ENCODE measurements at regions of chr5 and their contacts with region 1.

Region 1: DNA sequence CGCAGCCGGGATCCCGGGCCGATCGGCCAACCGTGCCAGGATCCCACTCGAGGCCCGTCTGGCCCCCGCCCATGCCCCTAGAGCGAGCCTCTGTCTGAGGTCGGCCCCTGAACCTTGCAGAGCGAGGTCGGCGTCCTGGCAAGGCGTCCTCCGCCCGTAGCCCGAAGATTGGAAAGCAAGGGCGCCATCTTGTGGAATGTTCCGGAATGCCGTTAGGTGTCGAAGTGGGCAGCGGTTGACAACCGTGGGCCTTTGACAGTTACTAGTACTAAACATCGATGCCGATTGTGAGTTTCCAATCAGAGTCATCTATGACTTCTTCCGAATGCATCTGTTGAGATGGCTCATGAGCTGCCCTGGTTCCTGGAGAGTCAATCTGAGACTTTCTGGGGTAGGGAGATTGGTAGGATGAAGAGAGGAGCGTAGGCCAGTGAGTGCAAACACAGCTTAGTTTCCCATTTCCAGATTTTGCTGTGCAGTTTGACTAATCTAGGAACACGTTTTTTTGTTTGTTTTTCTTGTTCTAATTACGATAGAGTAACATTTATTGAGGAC is 923 bp upstream of the PLK2 start:
- DNase-seq: peak; percentile 94
- H3K4me3 Mint-ChIP-seq: peak overlapping the region; percentile 92
- H3K27ac Mint-ChIP-seq: peak overlapping the region; percentile 96
- H3K4me1 Mint-ChIP-seq: peaks cover 29% of the 10 kb centered on the region
- H3K27me3 Mint-ChIP-seq: no peaks in the 10 kb centered on the region
- CTCF ChIP-seq: peak; percentile 72

Region 2: DNA sequence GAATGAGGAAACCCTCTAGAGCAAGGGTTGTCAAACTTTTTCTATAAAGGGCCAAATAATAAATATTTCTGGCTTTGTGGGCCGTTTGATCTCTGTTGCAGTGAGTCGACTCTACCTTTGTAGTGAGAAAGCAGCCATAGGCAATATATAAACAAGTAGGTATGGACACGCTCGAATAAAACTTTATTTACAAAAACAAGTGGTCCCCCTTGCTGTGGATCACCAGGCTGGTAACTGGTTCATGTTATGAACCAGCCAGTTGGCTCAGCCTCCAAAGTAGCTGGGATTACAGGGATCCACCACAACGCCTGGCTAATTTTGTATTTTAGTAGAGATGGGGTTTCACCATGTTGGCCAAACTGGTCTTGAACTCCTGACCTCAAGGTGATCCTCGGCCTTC is 1168.5 kb before region 1 on chr5:
- CTCF ChIA-PET with region 1: interaction called, 43 read pairs
- POLR2A ChIA-PET with region 1: interaction called, 8 read pairs
- intact Hi-C with region 1: no loop called
- DNase-seq: no peak
- H3K4me3 Mint-ChIP-seq: no peak overlapping the region
- H3K27ac Mint-ChIP-seq: no peak overlapping the region
- H3K4me1 Mint-ChIP-seq: no peaks in the 10 kb centered on the region
- H3K27me3 Mint-ChIP-seq: no peaks in the 10 kb centered on the region
- CTCF ChIP-seq: no peak

Region 3: DNA sequence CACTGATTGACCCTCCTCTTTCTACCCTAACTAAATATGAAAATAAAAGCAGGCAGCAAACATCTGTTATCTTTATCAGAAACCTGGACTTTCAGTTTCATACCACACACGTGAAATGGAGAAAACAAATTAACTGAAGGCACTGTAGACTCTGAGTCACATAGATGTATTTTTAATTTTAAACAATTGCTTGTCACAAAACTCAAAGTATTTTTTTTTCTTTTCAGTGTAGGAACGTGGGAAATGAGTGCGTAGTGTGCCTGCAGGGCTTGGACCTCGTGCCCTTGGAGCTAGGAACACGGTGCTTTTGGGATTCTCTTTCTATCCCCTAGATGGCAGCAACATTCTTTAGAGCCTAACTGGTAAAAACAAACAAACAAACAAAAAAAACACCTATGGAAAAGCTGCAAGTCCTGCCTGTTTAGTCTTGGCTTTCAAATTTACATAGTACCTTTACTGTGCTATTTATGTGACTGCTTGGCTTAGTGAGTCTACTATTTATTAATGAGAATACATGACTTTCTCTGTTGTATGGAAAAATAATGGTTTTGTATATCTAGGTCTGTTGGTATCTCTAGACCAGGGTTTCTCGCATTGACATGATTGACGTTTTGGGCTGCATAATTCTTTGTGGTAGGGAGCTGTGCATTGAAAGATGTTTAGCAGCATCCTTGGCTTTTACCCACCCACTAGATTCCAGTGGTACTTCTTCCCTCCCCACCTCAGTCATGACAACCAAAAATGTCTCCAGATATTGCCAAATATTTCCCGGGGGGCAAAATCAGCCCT is 961.4 kb before region 1 on chr5:
- CTCF ChIA-PET with region 1: interaction called, 48 read pairs
- POLR2A ChIA-PET with region 1: interaction called, 8 read pairs
- intact Hi-C with region 1: loop called (anchors 1 kb)
- DNase-seq: peak; percentile 69
- H3K4me3 Mint-ChIP-seq: peak overlapping the region; percentile 53
- H3K27ac Mint-ChIP-seq: no peak overlapping the region
- H3K4me1 Mint-ChIP-seq: peaks cover 21% of the 10 kb centered on the region
- H3K27me3 Mint-ChIP-seq: no peaks in the 10 kb centered on the region
- CTCF ChIP-seq: peak; percentile 63

Region 4: DNA sequence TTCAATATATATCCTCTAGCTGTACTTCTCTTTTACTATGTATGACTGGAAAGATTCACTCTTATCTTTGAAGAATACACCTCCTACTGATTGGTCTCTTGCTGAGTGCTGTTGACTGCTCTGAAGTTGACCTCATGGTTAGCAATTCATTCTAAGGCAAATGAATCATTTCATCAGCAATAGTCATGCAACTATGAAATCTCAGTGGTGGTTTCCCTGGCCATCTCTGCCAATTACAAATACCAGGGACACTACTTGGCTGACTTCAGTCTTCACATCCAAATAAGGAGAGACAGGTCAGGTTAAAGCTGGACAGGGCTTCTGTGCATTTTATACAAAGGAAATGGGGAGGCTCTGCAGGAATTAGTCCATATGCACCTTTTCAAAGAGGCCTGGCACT is 644.7 kb before region 1 on chr5:
- CTCF ChIA-PET with region 1: no interaction called
- POLR2A ChIA-PET with region 1: interaction called, 15 read pairs
- intact Hi-C with region 1: no loop called
- DNase-seq: peak; percentile 91
- H3K4me3 Mint-ChIP-seq: no peak overlapping the region
- H3K27ac Mint-ChIP-seq: peak overlapping the region; percentile 89
- H3K4me1 Mint-ChIP-seq: peaks cover 17% of the 10 kb centered on the region
- H3K27me3 Mint-ChIP-seq: no peaks in the 10 kb centered on the region
- CTCF ChIP-seq: no peak

Region 5: GRCh38 chr5:57937025-57937424 is 523.8 kb before region 1 on chr5:
- CTCF ChIA-PET with region 1: interaction called, 7 read pairs
- POLR2A ChIA-PET with region 1: interaction called, 16 read pairs
- intact Hi-C with region 1: loop called (anchors 1 kb)
- DNase-seq: no peak
- H3K4me3 Mint-ChIP-seq: no peak overlapping the region
- H3K27ac Mint-ChIP-seq: no peak overlapping the region
- H3K4me1 Mint-ChIP-seq: peaks cover 12% of the 10 kb centered on the region
- H3K27me3 Mint-ChIP-seq: no peaks in the 10 kb centered on the region
- CTCF ChIP-seq: no peak

Region 6: DNA sequence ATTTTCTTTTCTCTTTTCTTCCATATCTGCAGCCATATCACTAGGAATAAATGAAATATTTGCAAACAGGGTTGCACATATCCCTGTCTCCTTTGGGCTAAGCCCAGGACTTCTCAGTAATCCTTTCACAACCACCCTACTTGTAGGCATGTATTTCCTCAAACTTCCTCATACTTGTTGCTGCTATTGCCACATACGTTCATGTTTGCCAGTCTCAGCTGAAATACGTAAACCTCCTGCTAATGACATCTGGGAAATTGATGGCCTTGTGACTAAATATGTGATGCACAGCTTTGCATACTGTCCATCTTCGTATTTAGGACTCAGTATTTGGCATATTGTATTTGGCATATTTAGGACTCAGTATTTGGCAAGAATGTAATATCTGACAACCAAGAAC is 225.5 kb before region 1 on chr5:
- CTCF ChIA-PET with region 1: interaction called, 9 read pairs
- POLR2A ChIA-PET with region 1: interaction called, 29 read pairs
- intact Hi-C with region 1: no loop called
- DNase-seq: peak; percentile 87
- H3K4me3 Mint-ChIP-seq: no peak overlapping the region
- H3K27ac Mint-ChIP-seq: peak overlapping the region; percentile 69
- H3K4me1 Mint-ChIP-seq: peaks cover 25% of the 10 kb centered on the region
- H3K27me3 Mint-ChIP-seq: no peaks in the 10 kb centered on the region
- CTCF ChIP-seq: no peak

Measured in MCF 10A (cell line).